ENCODE measurements at regions of chr4 and their contacts with region 1.

Region 1: DNA sequence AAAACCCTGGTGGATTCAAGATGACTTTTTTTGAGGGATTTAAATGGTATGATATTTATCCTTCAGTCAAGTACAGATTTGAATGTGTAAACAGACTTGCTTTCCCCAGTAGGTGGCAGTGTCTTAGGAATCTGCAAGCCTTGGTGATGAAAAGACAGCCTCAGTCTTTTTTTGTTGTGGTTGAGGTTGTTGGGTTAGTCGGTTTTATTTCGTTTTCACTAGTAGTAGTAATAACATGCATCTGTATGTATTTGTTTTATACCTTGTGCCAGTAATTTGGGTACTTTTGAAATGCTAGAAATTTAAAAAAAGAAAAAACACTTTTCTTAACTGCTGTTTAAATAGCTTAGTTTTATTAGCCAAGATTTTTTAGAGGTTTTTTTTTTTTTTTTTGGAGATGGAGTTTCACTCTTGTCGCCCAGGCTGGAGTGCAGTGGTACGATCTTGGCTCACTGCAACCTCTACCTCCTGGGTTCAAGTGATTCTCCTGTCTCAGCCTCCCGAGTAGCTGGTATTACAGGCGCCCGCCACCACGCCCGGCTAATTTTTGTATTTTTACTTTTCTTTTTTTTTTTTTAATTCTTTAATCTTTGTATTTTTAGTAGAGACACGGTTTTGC is 39.2 kb downstream of the COPS4 start:
- DNase-seq: peak; percentile 76
- H3K4me3 Mint-ChIP-seq: no peak overlapping the region
- H3K27ac Mint-ChIP-seq: no peak overlapping the region
- H3K4me1 Mint-ChIP-seq: peaks cover 13% of the 10 kb centered on the region
- H3K27me3 Mint-ChIP-seq: no peaks in the 10 kb centered on the region

Region 2: DNA sequence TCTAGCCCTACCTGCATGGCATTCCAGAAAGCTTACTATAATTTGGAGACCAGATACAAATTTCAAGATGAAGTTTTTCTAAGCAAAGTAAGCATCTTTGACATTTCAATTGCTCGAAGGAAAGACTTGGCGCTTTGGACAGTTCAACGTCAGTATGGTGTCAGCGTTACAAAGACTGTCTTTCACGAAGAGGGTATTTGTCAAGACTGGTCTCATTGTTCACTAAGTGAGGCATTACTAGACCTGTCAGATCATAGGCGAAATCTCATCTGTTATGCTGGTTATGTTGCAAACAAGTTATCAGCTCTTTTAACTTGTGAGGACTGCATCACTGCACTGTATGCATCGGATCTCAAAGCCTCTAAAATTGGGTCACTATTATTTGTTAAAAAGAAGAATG is 156.1 kb before region 1 on chr4:
- CTCF ChIA-PET with region 1: no interaction called
- intact Hi-C with region 1: no loop called
- DNase-seq: no peak
- H3K4me3 Mint-ChIP-seq: no peak overlapping the region
- H3K27ac Mint-ChIP-seq: no peak overlapping the region
- H3K4me1 Mint-ChIP-seq: no peaks in the 10 kb centered on the region
- H3K27me3 Mint-ChIP-seq: no peaks in the 10 kb centered on the region

Region 3: GRCh38 chr4:83150653-83151330 is 76.6 kb after region 1 on chr4:
- CTCF ChIA-PET with region 1: interaction called, 4 read pairs
- intact Hi-C with region 1: loop called (anchors 1 kb)
- DNase-seq: no peak
- H3K4me3 Mint-ChIP-seq: no peak overlapping the region
- H3K27ac Mint-ChIP-seq: no peak overlapping the region
- H3K4me1 Mint-ChIP-seq: peaks cover 28% of the 10 kb centered on the region
- H3K27me3 Mint-ChIP-seq: no peaks in the 10 kb centered on the region

Region 4: DNA sequence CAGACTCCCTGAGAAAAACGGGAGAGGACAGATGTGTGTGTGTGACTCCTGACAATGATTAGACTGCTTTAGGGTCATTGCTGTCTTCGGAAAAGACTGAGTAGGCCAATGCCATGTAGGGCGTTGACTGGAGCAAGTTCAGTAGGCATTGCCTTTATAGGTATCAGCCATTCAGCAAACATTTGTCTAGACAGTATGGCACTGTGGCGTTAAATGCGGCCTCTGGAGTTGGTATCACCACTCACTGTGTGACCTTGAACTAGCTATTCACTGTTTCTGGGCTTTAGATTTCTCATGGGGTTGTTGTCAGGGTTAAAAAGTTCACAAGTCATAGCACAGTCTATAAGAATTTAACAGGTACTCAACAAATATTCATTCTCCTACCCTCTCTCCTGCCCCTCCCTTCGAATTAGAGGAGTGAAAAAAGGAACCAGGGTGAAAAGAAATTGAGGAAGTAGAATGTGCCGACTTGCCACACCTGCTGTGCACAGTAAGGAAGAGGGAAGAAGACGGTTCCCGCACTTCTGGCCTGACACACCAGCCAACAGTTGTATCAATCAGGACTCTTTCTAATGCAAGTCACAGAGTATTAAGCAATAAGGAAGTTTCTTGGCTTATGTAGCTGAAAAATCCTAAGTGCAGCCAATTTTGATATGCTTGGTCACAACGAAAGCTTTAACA is 123.5 kb after region 1 on chr4:
- CTCF ChIA-PET with region 1: no interaction called
- intact Hi-C with region 1: no loop called
- DNase-seq: no peak
- H3K4me3 Mint-ChIP-seq: no peak overlapping the region
- H3K27ac Mint-ChIP-seq: no peak overlapping the region
- H3K4me1 Mint-ChIP-seq: peaks cover 4% of the 10 kb centered on the region
- H3K27me3 Mint-ChIP-seq: no peaks in the 10 kb centered on the region

Region 5: DNA sequence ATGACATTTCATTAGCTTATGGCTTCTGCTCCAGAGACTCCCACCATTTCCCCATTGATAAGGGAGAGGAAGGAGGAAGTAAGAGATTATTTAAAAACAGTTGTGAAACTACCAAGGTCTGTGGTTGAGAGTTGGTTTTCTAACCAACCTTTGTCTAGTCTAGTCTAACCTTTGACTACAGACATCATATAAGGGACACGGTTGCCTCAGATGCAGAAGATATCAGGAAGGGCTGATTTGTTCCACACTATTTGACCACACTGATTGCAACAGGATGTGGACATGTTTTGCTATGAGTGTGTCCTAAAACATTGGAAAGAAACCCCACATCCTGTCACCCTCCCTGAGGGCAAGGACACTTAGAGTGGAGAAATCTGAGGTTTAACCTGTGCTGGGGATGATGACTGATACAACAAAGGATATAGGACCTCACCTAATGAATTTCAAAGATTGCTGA is 157.5 kb after region 1 on chr4:
- CTCF ChIA-PET with region 1: interaction called, 6 read pairs
- intact Hi-C with region 1: loop called (anchors 1 kb)
- DNase-seq: peak; percentile 68
- H3K4me3 Mint-ChIP-seq: no peak overlapping the region
- H3K27ac Mint-ChIP-seq: peak overlapping the region; percentile 16
- H3K4me1 Mint-ChIP-seq: peaks cover 46% of the 10 kb centered on the region
- H3K27me3 Mint-ChIP-seq: peaks cover 3% of the 10 kb centered on the region

Region 6: GRCh38 chr4:83259586-83259985 is 185.4 kb after region 1 on chr4:
- CTCF ChIA-PET with region 1: interaction called, 14 read pairs
- intact Hi-C with region 1: loop called (anchors 1 kb)
- DNase-seq: no peak
- H3K4me3 Mint-ChIP-seq: no peak overlapping the region
- H3K27ac Mint-ChIP-seq: no peak overlapping the region
- H3K4me1 Mint-ChIP-seq: no peaks in the 10 kb centered on the region
- H3K27me3 Mint-ChIP-seq: no peaks in the 10 kb centered on the region

Region 7: DNA sequence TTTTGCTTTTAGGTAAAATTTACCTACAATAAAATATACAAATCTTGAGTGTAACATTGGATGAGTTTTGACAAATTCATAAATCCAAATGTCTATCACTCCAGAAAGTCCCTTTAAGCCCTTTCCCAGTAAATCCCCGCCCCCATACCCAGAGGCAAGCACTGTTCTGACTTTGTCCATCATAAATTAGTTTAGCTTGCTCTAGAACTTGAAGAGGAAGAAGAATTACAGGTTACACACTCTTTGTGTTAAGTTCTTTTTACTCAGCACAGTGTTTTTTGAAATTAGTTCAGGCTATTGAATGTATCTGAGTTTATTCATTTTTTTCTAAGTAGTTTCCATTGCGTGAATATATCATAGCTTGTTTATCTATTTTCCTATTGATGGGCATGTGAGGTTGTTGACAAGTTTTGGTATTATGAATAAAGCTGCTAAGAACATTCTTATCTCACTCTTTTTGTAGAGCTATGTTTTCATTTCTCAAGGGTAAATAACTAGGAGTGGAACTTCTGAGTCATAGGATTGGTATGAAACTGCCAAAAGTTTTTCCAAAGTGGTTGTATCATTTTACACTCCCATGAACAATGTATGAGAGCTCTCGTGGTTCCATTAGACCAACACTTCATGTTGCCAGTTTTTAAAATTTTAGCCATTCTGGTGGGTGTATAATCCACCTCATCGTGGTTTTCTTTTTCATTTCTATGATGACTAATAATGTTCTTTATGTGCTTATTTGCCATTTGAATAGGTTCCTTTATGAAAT is 282.9 kb after region 1 on chr4:
- CTCF ChIA-PET with region 1: no interaction called
- intact Hi-C with region 1: loop called (anchors 2 kb)
- DNase-seq: peak; percentile 63
- H3K4me3 Mint-ChIP-seq: no peak overlapping the region
- H3K27ac Mint-ChIP-seq: peak overlapping the region; percentile 62
- H3K4me1 Mint-ChIP-seq: peaks cover 15% of the 10 kb centered on the region
- H3K27me3 Mint-ChIP-seq: no peaks in the 10 kb centered on the region

Measured in activated naive CD4-positive, alpha-beta T cell treated with anti-CD3 and anti-CD28 coated beads for 36 hours (primary cell).